GM12878 (cell line): ENCODE measurements at regions of chr7 and their contacts with region 1.

Region 1: DNA sequence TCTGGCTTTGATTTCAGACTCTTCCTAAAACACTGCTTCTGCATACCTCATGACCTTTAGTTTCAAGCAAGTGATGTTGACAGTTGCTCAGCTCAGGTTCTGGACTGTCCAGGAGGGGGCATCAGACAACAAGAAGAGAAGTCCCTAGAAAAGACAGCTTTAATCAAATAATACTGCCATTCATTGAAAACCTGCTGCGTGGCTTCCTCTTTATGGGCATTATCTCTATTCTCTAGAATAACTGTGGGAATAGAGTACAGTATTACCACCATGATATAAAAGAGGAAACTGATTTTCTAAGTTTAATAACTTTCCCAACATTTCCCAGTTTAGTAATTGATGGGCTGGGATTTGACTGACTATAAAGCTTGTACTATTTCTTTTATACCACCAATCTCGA is 170.4 kb downstream of the SNX13 start:
- DNase-seq: no peak
- ATAC-seq: peak; percentile 85
- H3K4me3 ChIP-seq: no peak overlapping the region
- H3K27ac ChIP-seq: no peak overlapping the region
- H3K4me1 ChIP-seq: 0 out of 2 replicates have a peak, but pooled peaks cover 3% of the 10 kb centered on the region
- H3K27me3 ChIP-seq: no peaks in the 10 kb centered on the region
- CTCF ChIP-seq: peak; percentile 73 to 86 (median 74)
- EP300 ChIP-seq: no peak
- POLR2A ChIP-seq: no peak
- RAD21 ChIP-seq: peak; percentile 99

Region 2: DNA sequence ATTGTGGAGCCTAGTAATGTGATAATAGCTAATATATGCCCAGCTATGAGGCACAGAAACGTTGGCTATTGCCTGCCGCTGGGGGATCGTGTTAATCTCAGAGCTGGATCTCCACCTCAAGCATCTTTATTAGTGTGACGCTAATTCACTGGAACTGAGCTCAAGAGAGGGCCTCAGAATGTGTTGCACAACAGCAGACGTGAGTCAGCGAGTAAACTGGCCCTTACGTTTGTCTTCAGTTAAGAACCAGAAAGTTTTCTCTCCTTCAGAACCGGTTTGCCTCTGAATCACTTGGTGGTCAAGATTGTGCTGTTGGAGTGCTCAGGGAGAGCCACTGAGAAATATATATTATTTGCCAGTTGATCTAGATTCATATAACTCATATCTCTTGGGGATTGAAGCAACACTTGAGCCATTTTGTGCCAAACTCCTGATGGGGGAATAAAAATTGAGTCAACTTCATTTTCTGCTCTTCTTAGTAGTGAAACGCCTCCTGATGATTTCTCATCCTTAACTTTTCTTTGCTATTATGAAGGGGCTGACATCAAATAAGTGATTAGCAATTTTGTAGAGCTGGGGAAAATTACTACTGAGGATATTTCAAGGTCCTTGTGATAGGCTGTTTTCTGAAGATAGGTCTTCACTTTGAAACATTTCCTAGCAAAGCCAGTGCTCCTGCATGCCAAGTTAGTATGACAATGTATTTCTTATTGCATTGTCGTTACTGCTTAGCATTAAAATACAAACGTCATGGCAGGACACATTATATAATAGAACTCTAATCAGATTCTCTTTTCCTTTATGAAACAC is 1101.7 kb before region 1 on chr7:
- CTCF ChIA-PET with region 1: no interaction called
- POLR2A ChIA-PET with region 1: no interaction called
- RAD21 ChIA-PET with region 1: no interaction called
- SMC1A ChIA-PET with region 1: no interaction called
- in situ Hi-C with region 1: no loop called
- intact Hi-C with region 1: no loop called
- DNase-seq: no peak
- ATAC-seq: no peak
- H3K4me3 ChIP-seq: no peak overlapping the region
- H3K27ac ChIP-seq: no peak overlapping the region
- H3K4me1 ChIP-seq: no peaks in the 10 kb centered on the region
- H3K27me3 ChIP-seq: no peaks in the 10 kb centered on the region
- CTCF ChIP-seq: no peak
- EP300 ChIP-seq: no peak
- POLR2A ChIP-seq: no peak
- RAD21 ChIP-seq: no peak

Region 3: GRCh38 chr7:17745610-17746009 is 24.3 kb before region 1 on chr7:
- CTCF ChIA-PET with region 1: interaction called, 11 read pairs
- POLR2A ChIA-PET with region 1: no interaction called
- RAD21 ChIA-PET with region 1: interaction called, 3 read pairs
- SMC1A ChIA-PET with region 1: interaction called, 3 read pairs
- in situ Hi-C with region 1: no loop called
- intact Hi-C with region 1: no loop called
- DNase-seq: no peak
- ATAC-seq: peak; percentile 58
- H3K4me3 ChIP-seq: no peak overlapping the region
- H3K27ac ChIP-seq: no peak overlapping the region
- H3K4me1 ChIP-seq: no peaks in the 10 kb centered on the region
- H3K27me3 ChIP-seq: no peaks in the 10 kb centered on the region
- CTCF ChIP-seq: no peak
- EP300 ChIP-seq: no peak
- POLR2A ChIP-seq: no peak
- RAD21 ChIP-seq: no peak

Region 4: GRCh38 chr7:17802056-17802455 is 32.1 kb after region 1 on chr7:
- CTCF ChIA-PET with region 1: interaction called, 13 read pairs
- POLR2A ChIA-PET with region 1: no interaction called
- RAD21 ChIA-PET with region 1: interaction called, 4 read pairs
- SMC1A ChIA-PET with region 1: interaction called, 14 read pairs
- in situ Hi-C with region 1: no loop called
- intact Hi-C with region 1: no loop called
- DNase-seq: no peak
- ATAC-seq: no peak
- H3K4me3 ChIP-seq: no peak overlapping the region
- H3K27ac ChIP-seq: no peak overlapping the region
- H3K4me1 ChIP-seq: no peaks in the 10 kb centered on the region
- H3K27me3 ChIP-seq: no peaks in the 10 kb centered on the region
- CTCF ChIP-seq: no peak
- EP300 ChIP-seq: no peak
- POLR2A ChIP-seq: no peak
- RAD21 ChIP-seq: no peak

Region 5: DNA sequence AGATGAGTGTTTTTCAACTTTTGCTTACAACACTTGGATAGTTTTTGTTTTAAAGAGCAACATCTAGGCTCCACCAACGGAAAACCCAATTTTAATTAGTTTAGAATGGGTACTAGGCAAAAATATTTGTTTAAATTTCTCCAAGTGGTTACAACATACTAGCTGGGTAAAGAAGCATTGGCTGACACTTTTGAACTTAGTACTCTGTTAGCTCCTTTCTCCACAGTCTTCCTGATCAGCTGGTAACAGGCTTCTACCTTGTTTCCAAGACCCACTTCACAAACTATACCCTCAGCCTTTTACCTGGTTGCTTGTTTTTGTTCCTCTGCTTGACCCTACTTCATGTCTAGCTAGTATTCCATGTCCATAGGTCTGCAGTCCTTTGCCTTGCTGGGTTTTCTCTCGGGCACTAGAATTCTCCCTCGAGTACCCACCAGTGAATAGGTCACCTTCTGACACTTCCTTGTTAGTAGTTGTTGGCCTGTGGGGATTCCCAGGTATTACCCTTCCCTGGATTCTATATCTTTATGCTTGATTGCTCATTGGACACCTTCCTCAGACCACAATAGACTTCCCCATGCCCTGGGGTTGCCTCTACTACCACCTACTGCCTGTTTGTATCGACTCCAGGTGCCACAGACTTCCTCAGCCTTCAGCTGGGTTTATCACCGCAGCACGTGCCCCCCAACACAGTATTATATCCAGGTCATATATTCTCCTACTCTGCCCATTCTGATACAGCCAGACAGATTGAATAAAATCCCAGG is 215.7 kb after region 1 on chr7:
- CTCF ChIA-PET with region 1: interaction called, 193 read pairs
- POLR2A ChIA-PET with region 1: no interaction called
- RAD21 ChIA-PET with region 1: interaction called, 94 read pairs
- SMC1A ChIA-PET with region 1: interaction called, 63 read pairs
- in situ Hi-C with region 1: no loop called
- intact Hi-C with region 1: no loop called
- DNase-seq: no peak
- ATAC-seq: no peak
- H3K4me3 ChIP-seq: no peak overlapping the region
- H3K27ac ChIP-seq: no peak overlapping the region
- H3K4me1 ChIP-seq: no peaks in the 10 kb centered on the region
- H3K27me3 ChIP-seq: no peaks in the 10 kb centered on the region
- CTCF ChIP-seq: 0 out of 6 replicates have a peak, but pooled peaks of 1 of the 3 experiments have one; percentile 2
- EP300 ChIP-seq: no peak
- POLR2A ChIP-seq: no peak
- RAD21 ChIP-seq: no peak

Region 6: GRCh38 chr7:18119985-18120384 is 350.1 kb after region 1 on chr7:
- CTCF ChIA-PET with region 1: interaction called, 13 read pairs
- POLR2A ChIA-PET with region 1: no interaction called
- RAD21 ChIA-PET with region 1: interaction called, 4 read pairs
- SMC1A ChIA-PET with region 1: interaction called, 7 read pairs
- in situ Hi-C with region 1: no loop called
- intact Hi-C with region 1: no loop called
- DNase-seq: no peak
- ATAC-seq: 0 out of 3 replicates have a peak, but pooled peaks have one; percentile 22
- H3K4me3 ChIP-seq: no peak overlapping the region
- H3K27ac ChIP-seq: no peak overlapping the region
- H3K4me1 ChIP-seq: no peaks in the 10 kb centered on the region
- H3K27me3 ChIP-seq: no peaks in the 10 kb centered on the region
- CTCF ChIP-seq: peak in 1 of 3 experiments; percentile 8; a peak in 1 of 6 replicates
- EP300 ChIP-seq: no peak
- POLR2A ChIP-seq: no peak
- RAD21 ChIP-seq: no peak

Region 7: GRCh38 chr7:18345641-18346234 is 575.8 kb after region 1 on chr7:
- CTCF ChIA-PET with region 1: interaction called, 34 read pairs
- POLR2A ChIA-PET with region 1: no interaction called
- RAD21 ChIA-PET with region 1: interaction called, 20 read pairs
- SMC1A ChIA-PET with region 1: interaction called, 16 read pairs
- in situ Hi-C with region 1: no loop called
- intact Hi-C with region 1: loop called (anchors 2 kb)
- DNase-seq: no peak
- ATAC-seq: peak; percentile 79
- H3K4me3 ChIP-seq: no peak overlapping the region
- H3K27ac ChIP-seq: no peak overlapping the region
- H3K4me1 ChIP-seq: no peaks in the 10 kb centered on the region
- H3K27me3 ChIP-seq: no peaks in the 10 kb centered on the region
- CTCF ChIP-seq: peak; percentile 67 to 73 (median 69)
- EP300 ChIP-seq: no peak
- POLR2A ChIP-seq: no peak
- RAD21 ChIP-seq: peak; percentile 80